WTC11 (cell line): ENCODE measurements at regions of chr1 and their contacts with region 1.

Region 1: DNA sequence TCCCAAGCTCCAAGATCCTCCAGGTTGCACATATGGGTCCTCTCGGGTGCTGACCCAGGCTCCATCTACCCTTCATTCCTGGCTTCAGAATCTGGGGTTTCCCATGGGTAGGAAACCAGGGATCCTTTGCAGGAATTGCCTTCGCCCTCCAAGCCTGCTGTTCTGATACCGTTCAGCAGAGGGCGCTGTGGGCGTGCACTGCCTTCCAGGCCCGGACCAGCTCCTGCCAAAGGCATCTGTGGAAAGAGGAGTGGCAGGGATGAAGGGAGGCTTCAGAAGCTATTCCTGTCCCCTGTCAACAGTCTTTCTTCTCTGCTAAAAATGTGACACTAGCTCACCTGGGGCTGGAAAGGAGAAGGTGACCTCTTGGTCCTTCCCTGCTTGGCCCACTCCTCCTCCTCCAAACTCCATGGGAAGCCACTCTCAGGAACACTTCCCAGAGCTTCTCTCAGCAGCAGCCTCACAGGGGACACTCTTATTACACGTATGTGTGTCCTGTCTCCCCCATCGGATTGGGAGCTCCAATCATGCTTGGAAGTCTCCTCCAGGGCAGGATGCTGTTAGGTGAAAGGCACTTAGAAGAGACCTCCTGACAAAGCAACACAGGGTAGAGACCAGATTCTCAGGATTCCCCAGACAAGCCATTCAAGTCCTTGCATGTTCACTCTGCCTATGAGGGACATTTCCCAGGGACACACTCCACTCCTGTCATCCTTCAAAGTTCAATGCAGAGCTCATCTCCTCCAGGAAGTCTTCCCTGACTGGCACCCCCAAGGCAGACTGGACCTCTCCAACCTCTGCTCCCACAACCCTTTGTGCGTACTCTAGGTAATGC is 71.3 kb downstream of the VWA5B1 start:
- DNase-seq: peak; percentile 95
- ATAC-seq: peak; percentile 77
- H3K4me3 Mint-ChIP-seq: no peak overlapping the region
- H3K27ac Mint-ChIP-seq: no peak overlapping the region
- H3K4me1 Mint-ChIP-seq: peaks cover 9% of the 10 kb centered on the region
- H3K27me3 Mint-ChIP-seq: peaks cover 50% of the 10 kb centered on the region
- CTCF ChIP-seq: peak; percentile 99

Region 2: GRCh38 chr1:20336105-20336605 is 25.9 kb before region 1 on chr1:
- CTCF ChIA-PET with region 1: interaction called, 13 read pairs
- POLR2A ChIA-PET with region 1: no interaction called
- DNase-seq: no peak
- ATAC-seq: no peak; the same call in 1 of the 2 replicates
- H3K4me3 Mint-ChIP-seq: no peak overlapping the region
- H3K27ac Mint-ChIP-seq: no peak overlapping the region
- H3K4me1 Mint-ChIP-seq: peaks cover 9% of the 10 kb centered on the region
- H3K27me3 Mint-ChIP-seq: no peaks in the 10 kb centered on the region
- CTCF ChIP-seq: no peak

Region 3: GRCh38 chr1:20376880-20377494 is 15.0 kb after region 1 on chr1:
- CTCF ChIA-PET with region 1: interaction called, 13 read pairs
- POLR2A ChIA-PET with region 1: no interaction called
- DNase-seq: peak; percentile 85
- ATAC-seq: peak; percentile 96
- H3K4me3 Mint-ChIP-seq: no peak overlapping the region
- H3K27ac Mint-ChIP-seq: no peak overlapping the region
- H3K4me1 Mint-ChIP-seq: 0 out of 2 replicates have a peak, but pooled peaks cover 6% of the 10 kb centered on the region
- H3K27me3 Mint-ChIP-seq: peaks cover 62% of the 10 kb centered on the region
- CTCF ChIP-seq: peak; percentile 67

Region 4: DNA sequence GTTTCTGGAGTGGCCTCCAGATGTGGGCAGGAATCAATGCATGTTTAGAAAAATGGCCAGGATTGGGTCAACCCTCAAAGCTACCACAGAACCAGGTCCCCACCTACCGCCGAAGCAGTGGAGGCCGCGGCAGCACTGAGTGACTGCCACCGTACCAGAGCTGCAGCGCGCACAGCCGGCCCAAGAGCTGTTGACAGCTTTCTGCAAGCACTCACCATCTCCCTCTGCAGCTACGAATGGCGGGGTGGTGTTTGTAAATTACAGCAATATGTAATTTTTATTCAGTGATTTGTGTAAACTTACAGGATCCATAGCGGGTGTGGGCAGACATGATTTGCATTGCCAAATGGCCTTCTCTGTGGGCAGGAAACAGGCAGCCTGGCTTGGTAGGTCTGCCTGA is 27.5 kb after region 1 on chr1:
- CTCF ChIA-PET with region 1: interaction called, 12 read pairs
- POLR2A ChIA-PET with region 1: no interaction called
- DNase-seq: no peak
- ATAC-seq: no peak
- H3K4me3 Mint-ChIP-seq: no peak overlapping the region
- H3K27ac Mint-ChIP-seq: no peak overlapping the region
- H3K4me1 Mint-ChIP-seq: peaks cover 18% of the 10 kb centered on the region
- H3K27me3 Mint-ChIP-seq: peaks cover 76% of the 10 kb centered on the region
- CTCF ChIP-seq: no peak

Region 5: DNA sequence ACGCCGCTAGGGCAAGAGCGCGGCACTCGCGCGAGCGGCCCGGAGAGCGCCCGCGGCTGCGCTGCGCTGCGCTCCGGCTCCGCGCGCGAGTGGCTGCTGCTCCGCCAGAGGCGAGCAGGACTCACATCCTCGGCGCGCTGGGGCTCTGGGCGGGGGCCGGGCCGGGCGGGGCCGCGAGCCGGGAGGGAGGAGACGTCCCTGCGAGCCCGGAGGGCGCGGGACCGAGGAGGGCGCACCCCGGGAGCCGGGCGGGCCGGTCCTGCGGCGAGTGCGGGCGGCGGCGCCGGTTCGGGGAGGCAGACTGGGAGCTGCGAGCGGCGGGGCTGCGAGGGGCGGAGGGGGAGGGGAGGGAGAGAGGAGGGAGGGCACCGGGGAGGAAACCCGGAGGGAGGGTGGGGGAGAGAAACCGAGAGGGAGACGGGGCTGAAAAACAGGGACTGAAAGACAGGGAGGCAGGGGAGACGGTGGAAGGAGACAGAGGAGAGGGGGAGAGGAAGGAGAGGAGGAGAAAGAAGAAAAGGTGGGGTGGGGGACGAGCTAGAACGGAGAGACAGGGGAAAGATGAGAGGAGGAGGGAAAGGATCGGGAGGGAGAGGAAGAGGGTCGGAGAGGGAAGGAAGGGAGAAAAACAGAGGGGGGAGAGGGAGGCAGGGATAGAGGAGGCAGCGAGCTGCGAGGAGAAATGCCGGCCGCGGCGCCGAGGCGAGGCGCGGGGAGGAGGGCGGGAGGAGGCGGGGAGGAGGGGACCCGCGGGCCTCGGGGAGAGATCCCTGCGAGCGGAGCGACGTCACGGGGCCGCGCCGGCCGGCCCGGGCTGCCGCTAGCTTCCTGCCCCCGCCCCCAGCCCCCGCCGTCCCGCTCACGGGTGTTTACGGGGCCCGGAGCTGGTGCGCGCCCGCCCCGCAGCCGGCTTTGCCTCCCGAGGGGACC is 123.8 kb after region 1 on chr1 and contains the start of gene CAMK2N1:
- CTCF ChIA-PET with region 1: interaction called, 41 read pairs
- POLR2A ChIA-PET with region 1: interaction called, 3 read pairs
- DNase-seq: peak; percentile 65
- ATAC-seq: peak; percentile 20
- H3K4me3 Mint-ChIP-seq: peak within 1 kb of the TSS; percentile 89
- H3K27ac Mint-ChIP-seq: peak within 1 kb of the TSS; percentile 79
- H3K4me1 Mint-ChIP-seq: peaks cover 46% of the 10 kb centered on the region
- H3K27me3 Mint-ChIP-seq: peaks cover 80% of the 10 kb centered on the region
- CTCF ChIP-seq: no peak
- total RNA-seq, gene CAMK2N1: 10.0 to 10.9 TPM (median 10.1 TPM) in 3 replicates

Region 6: GRCh38 chr1:20493839-20494608 is 132.0 kb after region 1 on chr1:
- CTCF ChIA-PET with region 1: interaction called, 42 read pairs
- POLR2A ChIA-PET with region 1: no interaction called
- DNase-seq: peak; percentile 93
- ATAC-seq: peak; percentile 82
- H3K4me3 Mint-ChIP-seq: no peak overlapping the region
- H3K27ac Mint-ChIP-seq: no peak overlapping the region
- H3K4me1 Mint-ChIP-seq: peaks cover 4% of the 10 kb centered on the region
- H3K27me3 Mint-ChIP-seq: peaks cover 22% of the 10 kb centered on the region
- CTCF ChIP-seq: peak; percentile 91